ENCODE measurements at regions of chr2 and their contacts with region 1.

Region 1: DNA sequence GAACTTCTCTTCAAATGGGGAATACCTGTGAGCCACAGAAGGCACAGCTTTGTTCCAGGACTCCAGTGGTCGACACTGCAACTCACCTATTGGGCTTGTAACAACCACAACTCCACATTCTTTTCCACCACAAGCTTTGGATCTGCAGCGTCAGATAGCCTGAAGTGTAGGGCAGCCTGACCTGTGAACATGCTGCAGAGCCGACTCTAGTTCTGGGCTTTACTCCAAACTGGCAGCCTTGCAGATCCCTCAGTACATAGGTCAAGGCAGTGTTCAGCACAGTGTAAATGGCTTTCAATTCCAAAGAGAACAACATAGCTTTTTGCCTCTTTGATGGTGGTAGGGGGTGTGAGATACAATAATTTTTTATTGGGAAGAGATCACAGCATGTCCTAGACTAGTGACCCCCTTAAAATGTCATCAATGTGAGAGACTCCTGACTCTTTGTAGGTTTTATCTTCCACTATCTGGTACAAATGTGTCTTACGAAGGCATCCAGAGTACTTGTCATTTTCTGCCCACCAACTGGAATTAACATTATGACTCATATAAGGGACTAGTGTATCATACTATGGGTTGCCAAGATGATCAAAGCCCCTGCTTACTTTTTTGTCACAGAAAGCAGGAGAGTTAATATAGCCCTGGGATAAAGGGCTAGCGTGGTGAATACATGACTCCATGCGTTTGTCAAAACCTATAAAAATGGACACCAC is 149.8 kb downstream of the COPS8 start:
- DNase-seq: peak; percentile 97
- H3K4me3 ChIP-seq: no peak overlapping the region
- CTCF ChIP-seq: no peak

Region 2: GRCh38 chr2:237291138-237291792 is 55.7 kb after region 1 on chr2:
- in situ Hi-C with region 1: loop called (anchors 10 kb)
- DNase-seq: peak; percentile 99
- H3K4me3 ChIP-seq: no peak overlapping the region
- CTCF ChIP-seq: no peak

Region 3: DNA sequence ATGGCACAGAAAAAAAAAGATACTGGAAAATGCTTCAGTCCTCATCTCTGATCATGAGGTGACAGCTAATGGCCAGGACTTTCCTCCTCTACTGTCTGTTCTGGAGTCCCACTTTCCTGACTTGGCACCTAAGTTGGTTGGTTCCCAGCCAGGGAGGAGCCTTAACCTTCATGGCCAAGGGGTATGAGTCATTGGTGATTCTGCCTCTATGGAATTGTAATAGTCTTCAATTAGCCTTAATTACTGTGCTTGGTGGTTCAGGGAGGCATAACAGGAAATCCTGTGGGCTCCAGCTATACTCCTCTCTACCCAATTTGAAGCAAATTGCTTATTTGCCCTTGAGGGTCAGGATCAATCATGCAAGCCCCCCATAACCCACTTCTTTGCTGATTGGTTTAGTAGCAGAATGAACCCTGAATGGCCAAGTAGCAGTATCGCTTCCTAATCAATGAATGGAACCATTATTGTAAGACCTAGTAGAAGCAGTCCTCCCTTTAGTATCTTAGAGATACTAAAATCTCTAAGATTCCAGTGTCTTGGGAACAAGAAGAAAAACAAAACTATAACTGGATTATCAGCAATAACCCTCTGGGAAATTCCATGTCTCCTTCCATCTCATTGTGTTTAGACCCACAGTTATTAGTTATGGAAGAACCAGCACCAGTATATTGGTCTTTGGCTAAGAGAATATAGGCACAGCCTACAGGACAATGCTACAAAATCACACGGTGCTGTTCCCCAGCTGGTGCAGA is 69.4 kb after region 1 on chr2:
- in situ Hi-C with region 1: no loop called
- DNase-seq: peak; percentile 58
- H3K4me3 ChIP-seq: no peak overlapping the region
- CTCF ChIP-seq: no peak

Region 4: DNA sequence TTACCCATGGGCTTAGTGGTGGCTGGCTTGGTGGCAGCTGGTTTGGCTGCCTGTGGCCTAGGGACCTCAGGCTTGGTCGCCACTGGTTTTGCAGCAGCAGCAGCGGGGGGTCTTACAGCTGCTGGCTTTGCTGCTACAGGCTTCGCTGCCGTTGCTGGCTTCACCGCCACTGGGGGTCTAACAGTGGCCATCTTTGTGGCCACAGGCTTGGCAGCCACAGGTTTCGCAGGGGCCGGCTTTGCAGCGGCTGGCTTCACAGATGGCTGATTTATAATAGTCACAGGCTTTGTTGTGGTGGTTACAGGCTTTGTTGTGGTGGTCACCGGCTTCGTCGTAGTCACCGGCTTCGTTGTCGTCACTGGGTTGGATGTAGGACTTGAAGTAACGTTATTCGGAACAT is 100.6 kb after region 1 on chr2:
- in situ Hi-C with region 1: loop called (anchors 5 kb)
- DNase-seq: no peak
- H3K4me3 ChIP-seq: no peak overlapping the region
- CTCF ChIP-seq: no peak

Measured in astrocyte of the cerebellum (primary cell).